MCF 10A (cell line): ENCODE measurements at regions of chr3 and their contacts with region 1.

Region 1: DNA sequence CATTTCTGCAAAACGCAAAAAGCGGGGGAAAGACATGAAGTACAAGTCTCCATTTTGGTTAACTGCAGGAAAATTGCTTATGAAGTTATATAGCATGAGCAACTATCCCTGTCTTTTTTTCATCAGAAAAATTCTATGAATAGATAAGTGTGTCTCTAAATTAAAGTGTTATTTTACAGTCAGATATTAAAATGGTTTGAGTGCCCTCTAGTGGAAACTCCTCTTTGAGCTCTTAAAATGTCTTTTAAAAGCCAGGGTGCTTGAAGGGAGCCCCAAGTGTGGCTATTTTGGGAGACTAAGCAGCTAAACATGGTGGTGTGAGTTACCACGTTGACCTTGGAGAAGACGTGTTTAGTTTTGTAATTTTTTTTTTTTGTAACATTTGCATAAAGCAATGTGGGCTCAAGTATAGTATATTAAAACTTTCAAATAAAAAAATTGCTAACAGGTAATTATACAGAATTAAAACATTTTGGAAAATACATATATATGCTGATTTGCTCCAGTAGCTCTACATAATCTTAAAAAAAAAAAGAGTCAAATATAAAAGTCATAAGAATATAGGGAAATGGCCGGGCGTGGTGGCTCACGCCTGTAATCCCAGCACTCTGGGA is 77.2 kb downstream of the PPP2R3A start:
- DNase-seq: peak; percentile 65
- H3K4me3 Mint-ChIP-seq: no peak overlapping the region
- H3K27ac Mint-ChIP-seq: no peak overlapping the region
- H3K4me1 Mint-ChIP-seq: no peaks in the 10 kb centered on the region
- H3K27me3 Mint-ChIP-seq: no peaks in the 10 kb centered on the region
- CTCF ChIP-seq: peak; percentile 61

Region 2: DNA sequence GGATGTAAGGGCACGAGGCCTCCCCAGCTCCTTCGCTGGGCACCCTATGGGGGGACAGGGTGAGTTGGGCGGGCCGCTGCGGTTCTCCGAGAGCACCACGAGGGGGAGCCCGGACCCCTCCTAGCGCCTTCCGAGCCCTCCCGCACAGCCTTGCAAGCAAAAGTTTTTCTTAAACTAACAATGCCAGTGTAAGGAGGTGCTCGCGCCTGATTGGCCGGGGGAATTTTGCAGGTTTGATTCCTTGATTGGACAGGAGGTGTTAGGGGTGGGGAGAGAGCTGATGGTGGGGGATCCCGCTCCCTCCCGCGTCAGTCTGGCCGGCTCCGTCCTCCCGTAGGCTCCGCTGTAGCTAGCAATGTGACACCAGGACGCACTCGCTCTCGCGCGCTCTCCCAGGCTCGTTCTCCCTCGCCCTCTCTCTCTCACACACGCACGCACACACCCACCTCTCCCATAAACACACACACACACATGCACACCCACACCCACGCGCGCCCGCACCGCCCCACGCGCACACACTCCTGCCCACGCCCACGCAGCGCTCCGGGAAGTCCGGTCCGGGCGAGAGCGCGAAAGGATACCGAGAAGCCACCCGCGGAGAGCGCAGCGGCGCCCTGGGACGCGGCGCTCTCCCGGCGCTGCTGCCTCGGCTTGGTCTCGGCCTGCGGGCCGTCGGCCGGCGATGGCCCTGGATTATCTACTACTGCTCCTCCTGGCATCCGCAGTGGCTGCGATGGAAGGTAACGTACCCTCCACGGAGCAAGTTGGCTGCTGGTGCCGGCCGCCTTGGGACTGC is 1247.6 kb before region 1 on chr3 and contains the start of gene EPHB1:
- CTCF ChIA-PET with region 1: interaction called, 7 read pairs
- POLR2A ChIA-PET with region 1: no interaction called
- intact Hi-C with region 1: loop called (anchors 10 kb)
- DNase-seq: peak; percentile 69
- H3K4me3 Mint-ChIP-seq: peak within 1 kb of the TSS; percentile 69
- H3K27ac Mint-ChIP-seq: no peak within 1 kb of the TSS
- H3K4me1 Mint-ChIP-seq: peaks cover 5% of the 10 kb centered on the region
- H3K27me3 Mint-ChIP-seq: peaks cover 48% of the 10 kb centered on the region
- CTCF ChIP-seq: peak; percentile 90
- total RNA-seq, gene EPHB1: not detected in 2 replicates

Region 3: DNA sequence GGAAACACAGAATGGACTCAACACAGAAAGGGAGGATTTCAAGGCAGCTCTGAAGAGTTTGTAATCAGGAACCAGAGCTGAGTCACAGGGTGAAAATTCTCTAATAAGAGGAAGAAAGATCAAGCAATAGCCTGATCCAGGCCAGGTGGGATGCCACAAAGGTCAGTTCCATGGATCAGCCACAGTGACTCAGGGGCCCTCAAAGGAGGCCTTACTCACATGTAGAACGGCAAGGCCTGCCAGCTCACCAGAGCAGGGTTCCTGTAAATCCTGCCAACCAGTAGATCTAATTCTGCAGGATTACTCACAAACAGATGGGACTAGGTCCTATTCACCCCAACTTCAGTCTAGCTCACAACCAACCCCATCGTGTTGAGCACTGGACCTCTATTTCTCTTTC is 155.5 kb before region 1 on chr3:
- CTCF ChIA-PET with region 1: interaction called, 12 read pairs
- POLR2A ChIA-PET with region 1: no interaction called
- intact Hi-C with region 1: no loop called
- DNase-seq: peak; percentile 21
- H3K4me3 Mint-ChIP-seq: no peak overlapping the region
- H3K27ac Mint-ChIP-seq: no peak overlapping the region
- H3K4me1 Mint-ChIP-seq: no peaks in the 10 kb centered on the region
- H3K27me3 Mint-ChIP-seq: peaks cover 29% of the 10 kb centered on the region
- CTCF ChIP-seq: no peak

Region 4: DNA sequence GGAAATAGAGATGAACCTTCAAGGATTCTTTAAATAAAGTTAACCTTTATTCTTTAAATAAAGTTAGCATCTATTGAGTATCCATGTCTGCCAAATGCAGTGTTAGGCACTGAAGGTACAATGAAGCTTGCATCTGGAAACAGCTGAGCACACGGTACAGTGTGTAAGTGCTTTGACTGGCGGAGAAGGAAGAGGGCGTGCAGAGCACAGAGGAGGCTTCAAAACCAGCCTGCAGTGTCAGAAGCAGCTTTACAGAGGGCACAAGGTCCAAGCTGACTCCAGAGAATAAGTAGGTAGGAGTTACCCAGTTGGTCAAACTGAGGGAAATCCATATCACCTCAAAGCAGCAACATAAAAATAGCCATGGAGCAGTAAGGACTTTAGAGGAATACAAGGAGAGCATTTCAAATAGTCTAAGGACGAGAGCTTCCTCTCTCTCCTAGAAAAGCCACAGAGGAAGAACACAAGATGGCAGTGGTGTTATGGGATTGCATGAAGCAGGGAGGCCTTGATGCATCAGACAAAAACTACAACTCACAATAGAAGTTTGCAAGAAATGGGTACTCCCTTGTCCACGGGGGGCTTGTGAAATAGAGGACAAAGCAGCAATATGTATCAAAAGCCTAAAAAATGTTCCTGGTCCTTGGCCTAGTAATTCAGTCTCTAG is 137.5 kb before region 1 on chr3:
- CTCF ChIA-PET with region 1: interaction called, 207 read pairs
- POLR2A ChIA-PET with region 1: interaction called, 15 read pairs
- intact Hi-C with region 1: no loop called
- DNase-seq: peak; percentile 30
- H3K4me3 Mint-ChIP-seq: no peak overlapping the region
- H3K27ac Mint-ChIP-seq: no peak overlapping the region
- H3K4me1 Mint-ChIP-seq: peaks cover 12% of the 10 kb centered on the region
- H3K27me3 Mint-ChIP-seq: peaks cover 14% of the 10 kb centered on the region
- CTCF ChIP-seq: no peak

Region 5: DNA sequence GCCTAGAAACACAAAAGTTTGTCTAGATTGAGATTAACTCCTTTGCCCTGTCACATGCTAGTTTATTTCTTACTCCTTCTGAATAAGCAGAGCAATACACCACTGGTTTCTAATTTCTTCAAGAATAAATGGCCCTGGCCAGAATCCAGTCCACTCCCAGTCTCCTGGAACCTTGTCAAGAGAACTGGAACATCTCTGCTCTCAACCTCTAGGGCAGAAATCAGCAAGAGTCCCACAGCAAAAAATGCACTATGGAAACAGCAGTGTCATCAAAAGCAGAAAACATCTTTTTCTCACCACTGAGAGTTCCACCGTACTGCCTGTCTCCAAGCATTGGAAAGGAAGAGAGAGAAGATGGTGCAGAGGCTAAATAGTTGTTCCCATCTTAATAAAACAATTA is 113.0 kb before region 1 on chr3:
- CTCF ChIA-PET with region 1: interaction called, 447 read pairs
- POLR2A ChIA-PET with region 1: interaction called, 5 read pairs
- intact Hi-C with region 1: no loop called
- DNase-seq: peak; percentile 72
- H3K4me3 Mint-ChIP-seq: peak overlapping the region; percentile 22
- H3K27ac Mint-ChIP-seq: peak overlapping the region; percentile 92
- H3K4me1 Mint-ChIP-seq: peaks cover 42% of the 10 kb centered on the region
- H3K27me3 Mint-ChIP-seq: no peaks in the 10 kb centered on the region
- CTCF ChIP-seq: no peak

Region 6: DNA sequence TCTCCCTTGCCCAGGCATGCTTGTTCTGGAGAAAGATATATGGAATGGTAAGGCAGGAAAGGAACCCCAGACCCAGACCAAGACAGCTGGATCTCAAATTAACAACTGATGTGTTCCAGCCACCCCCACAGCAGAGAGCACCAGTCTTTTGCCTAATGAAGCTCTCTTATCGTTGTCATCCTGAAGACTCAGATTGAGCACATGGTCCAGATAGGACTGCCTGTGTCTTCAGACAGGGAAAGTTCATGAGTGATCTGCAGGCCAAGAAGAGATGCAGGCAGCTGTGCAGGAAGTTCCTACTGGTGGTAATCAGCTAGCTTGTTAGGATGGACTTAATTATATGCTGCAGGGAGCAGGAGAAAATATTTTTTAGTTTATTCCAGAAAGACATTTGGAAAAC is 23.8 kb before region 1 on chr3:
- CTCF ChIA-PET with region 1: interaction called, 28 read pairs
- POLR2A ChIA-PET with region 1: interaction called, 3 read pairs
- intact Hi-C with region 1: no loop called
- DNase-seq: no peak
- H3K4me3 Mint-ChIP-seq: no peak overlapping the region
- H3K27ac Mint-ChIP-seq: no peak overlapping the region
- H3K4me1 Mint-ChIP-seq: peaks cover 6% of the 10 kb centered on the region
- H3K27me3 Mint-ChIP-seq: no peaks in the 10 kb centered on the region
- CTCF ChIP-seq: no peak

Region 7: DNA sequence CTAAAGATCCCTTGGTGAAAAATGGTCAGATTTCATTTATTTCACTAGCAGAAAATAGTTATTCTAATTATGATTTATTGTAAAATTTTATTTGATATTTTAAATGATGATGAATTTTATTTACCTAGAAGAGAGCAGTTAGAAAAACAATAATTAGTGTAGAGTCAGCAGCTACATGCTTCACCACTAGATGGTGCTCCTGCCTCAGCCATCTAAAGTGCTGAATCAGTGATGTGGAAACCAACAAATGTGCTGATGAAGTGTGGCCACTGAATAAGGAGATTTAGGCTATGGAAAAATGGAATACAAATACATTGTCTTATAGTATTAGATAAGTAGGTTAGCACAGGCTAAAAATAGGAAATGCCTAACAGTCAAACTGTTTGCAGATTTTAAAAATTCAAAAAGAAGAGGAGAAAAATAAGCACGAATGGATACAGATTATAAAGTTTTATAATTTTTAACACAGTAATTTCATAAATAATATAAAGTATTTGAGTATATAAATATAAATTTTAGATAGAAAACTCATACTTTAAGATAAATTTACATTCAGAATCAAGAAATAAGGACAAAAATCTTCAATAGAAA is 32.6 kb after region 1 on chr3:
- CTCF ChIA-PET with region 1: interaction called, 15 read pairs
- POLR2A ChIA-PET with region 1: no interaction called
- intact Hi-C with region 1: no loop called
- DNase-seq: peak; percentile 86
- H3K4me3 Mint-ChIP-seq: no peak overlapping the region
- H3K27ac Mint-ChIP-seq: peak overlapping the region; percentile 8
- H3K4me1 Mint-ChIP-seq: peaks cover 22% of the 10 kb centered on the region
- H3K27me3 Mint-ChIP-seq: no peaks in the 10 kb centered on the region
- CTCF ChIP-seq: peak; percentile 86